ENCODE measurements at regions of chr6 and their contacts with region 1.

Region 1: GRCh38 chr6:16761471-16762267 is 409 bp upstream of the ATXN1 start:
- DNase-seq: peak; percentile 72
- ATAC-seq: peak; percentile 59
- H3K4me3 Mint-ChIP-seq: peak overlapping the region; percentile 95
- H3K27ac Mint-ChIP-seq: peak overlapping the region; percentile 92
- H3K4me1 Mint-ChIP-seq: peaks cover 38% of the 10 kb centered on the region
- H3K27me3 Mint-ChIP-seq: no peaks in the 10 kb centered on the region
- CTCF ChIP-seq: no peak

Region 2: DNA sequence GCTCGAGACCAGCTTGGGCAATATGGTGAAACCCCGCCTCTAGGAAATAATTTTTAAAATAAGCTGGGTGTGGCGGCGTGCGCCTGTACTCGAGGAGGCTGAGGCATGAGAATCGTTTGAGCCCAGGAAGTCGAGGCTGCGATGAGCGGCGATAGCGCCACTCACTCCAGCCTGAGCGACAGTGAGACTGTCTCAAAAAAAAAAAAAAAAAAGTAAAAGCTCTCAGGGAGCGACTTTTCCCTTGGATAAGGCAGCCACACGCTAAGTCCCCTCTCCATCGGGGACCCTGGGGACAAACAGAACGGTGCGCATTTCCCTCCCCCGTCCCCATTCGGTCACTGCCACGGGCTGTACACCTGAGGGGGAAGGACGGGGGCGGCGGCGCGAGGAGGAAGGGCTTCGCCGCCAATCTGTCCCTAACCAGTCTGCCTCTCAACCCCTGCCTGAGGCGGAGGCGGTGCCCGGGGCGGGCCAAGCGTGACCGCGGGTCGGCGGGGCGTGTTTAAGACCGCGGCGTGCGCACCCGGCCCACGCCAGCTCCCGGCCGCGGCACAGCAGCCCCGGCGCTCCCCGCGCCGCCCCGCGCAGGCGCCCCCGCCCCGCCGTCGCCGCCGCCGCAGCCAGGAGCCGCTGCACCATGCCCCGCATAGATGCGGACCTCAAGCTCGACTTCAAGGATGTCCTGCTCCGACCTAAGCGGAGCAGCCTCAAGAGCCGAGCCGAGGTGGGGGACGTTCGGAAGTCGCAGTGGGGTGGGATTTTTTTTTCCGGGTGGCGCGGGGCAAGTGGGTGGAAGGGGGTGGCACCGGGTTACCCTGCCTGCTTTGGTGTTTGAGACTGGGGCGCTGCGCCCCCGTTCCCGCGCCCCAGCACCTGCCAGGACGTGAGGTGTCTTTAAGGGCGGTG is 523.4 kb before region 1 on chr6 and contains the start of gene GMPR:
- CTCF ChIA-PET with region 1: no interaction called
- POLR2A ChIA-PET with region 1: no interaction called
- intact Hi-C with region 1: loop called (anchors 5 kb)
- DNase-seq: peak; percentile 57
- ATAC-seq: peak; percentile 87
- H3K4me3 Mint-ChIP-seq: peak within 1 kb of the TSS; percentile 91
- H3K27ac Mint-ChIP-seq: peak within 1 kb of the TSS; percentile 57
- H3K4me1 Mint-ChIP-seq: peaks cover 34% of the 10 kb centered on the region
- H3K27me3 Mint-ChIP-seq: peaks cover 24% of the 10 kb centered on the region
- CTCF ChIP-seq: no peak
- total RNA-seq, gene GMPR: 0.47 and 0.98 TPM in 2 replicates

Region 3: DNA sequence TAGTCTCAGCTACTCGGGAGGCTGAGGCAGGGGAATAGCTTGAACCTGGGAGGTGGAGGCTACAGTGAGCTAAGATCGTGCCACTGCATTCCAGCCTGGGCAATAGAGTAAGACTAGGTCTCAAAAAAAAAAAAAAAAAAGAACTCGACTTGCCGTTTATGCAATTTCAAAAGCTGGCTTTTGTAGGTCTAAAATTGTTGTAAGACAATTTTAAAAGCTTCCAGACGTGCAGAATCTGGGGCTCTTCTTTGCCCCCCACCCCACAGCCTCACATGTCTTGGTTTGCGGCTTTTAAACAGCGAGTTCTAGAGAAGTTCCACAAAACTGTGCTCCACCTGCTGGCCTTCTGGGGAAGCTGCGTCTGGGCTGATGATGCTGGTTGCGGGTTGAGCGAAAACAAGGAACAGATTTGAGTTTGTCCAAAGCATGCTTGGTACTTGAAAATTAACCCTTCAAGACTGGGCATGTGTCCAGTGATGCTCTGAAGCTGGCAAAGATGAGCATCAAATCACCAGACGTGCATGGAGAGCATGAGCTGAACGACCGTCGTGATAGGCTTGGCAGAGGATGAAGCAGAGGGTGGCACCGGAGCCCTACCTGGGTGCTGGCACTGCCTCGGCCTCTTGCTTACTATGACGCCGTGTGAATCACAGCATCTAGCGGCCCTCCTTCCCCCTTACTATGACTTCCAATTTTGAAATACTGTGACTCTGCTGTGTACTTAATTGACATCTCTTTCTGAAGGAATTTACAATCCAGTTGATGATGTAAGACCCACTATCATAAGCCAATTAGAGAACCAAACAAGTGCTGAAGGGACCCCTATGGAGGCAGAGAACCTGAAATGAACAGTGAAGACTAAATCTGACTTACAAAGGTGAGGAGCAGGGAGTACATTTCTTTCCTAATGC is 351.9 kb before region 1 on chr6:
- CTCF ChIA-PET with region 1: interaction called, 34 read pairs
- POLR2A ChIA-PET with region 1: interaction called, 20 read pairs
- intact Hi-C with region 1: loop called (anchors 1 kb)
- DNase-seq: peak; percentile 32
- ATAC-seq: peak; percentile 60
- H3K4me3 Mint-ChIP-seq: peak overlapping the region; percentile 63
- H3K27ac Mint-ChIP-seq: peak overlapping the region; percentile 37
- H3K4me1 Mint-ChIP-seq: peaks cover 66% of the 10 kb centered on the region
- H3K27me3 Mint-ChIP-seq: no peaks in the 10 kb centered on the region
- CTCF ChIP-seq: no peak

Region 4: DNA sequence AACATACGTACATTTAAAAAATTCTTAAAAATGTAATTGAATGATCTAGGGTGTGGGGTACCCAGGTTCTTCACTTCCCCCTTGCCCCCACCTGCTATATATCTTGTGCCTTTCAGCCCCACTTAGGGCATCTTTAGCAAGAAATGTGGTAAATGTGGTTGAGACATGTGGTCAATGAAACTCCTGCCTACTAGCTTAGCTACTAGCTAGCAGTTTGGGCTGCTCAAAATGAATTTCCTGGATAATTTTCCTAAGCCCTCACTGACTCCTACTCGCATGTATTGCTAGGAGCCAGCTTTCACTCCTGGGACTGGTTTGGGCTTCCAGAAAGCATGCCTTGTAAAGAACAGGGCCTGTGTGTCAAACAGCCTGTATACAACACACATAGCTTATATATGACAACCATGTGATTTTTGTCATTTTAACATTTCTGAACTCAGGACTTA is 257.7 kb before region 1 on chr6:
- CTCF ChIA-PET with region 1: interaction called, 174 read pairs
- POLR2A ChIA-PET with region 1: interaction called, 4 read pairs
- intact Hi-C with region 1: no loop called
- DNase-seq: no peak
- ATAC-seq: peak; percentile 75
- H3K4me3 Mint-ChIP-seq: peak overlapping the region; percentile 46
- H3K27ac Mint-ChIP-seq: peak overlapping the region; percentile 80
- H3K4me1 Mint-ChIP-seq: peaks cover 42% of the 10 kb centered on the region
- H3K27me3 Mint-ChIP-seq: no peaks in the 10 kb centered on the region
- CTCF ChIP-seq: no peak

Region 5: DNA sequence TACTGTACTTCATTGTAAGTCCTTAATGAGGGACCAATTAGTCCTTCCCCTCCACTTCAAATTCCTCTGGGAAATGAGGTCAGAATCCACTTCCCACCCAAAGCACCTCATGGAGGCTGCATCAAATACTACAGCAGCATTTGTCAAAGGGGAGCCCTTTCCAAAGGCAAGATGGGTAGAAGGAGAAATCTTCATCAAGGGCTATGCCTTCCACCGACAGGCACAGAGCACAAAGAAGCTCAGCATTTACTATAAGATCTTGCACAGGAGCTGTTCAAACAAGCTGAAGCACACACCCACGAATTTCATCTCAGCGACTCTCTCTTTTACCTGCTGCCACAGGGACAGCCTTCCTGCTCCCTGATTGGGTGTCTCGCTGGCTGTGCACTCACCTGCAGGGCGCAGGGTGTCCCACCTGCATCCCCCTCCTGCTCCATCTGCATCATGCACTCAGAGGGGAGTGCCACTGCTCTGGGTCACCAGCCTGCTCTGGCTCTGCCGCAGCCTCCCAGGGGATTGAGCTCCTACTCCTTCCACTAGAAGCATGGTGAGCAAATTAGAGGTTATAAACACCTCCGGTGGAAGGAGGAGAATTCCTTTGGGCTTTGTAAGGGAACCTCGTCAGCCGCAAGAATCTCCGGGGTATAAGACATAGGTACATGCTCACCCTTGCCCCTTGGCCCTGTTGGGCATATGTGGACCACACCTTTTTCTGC is 164.9 kb before region 1 on chr6:
- CTCF ChIA-PET with region 1: interaction called, 8 read pairs
- POLR2A ChIA-PET with region 1: interaction called, 18 read pairs
- intact Hi-C with region 1: loop called (anchors 1 kb)
- DNase-seq: no peak
- ATAC-seq: no peak
- H3K4me3 Mint-ChIP-seq: no peak overlapping the region
- H3K27ac Mint-ChIP-seq: no peak overlapping the region
- H3K4me1 Mint-ChIP-seq: peaks cover 49% of the 10 kb centered on the region
- H3K27me3 Mint-ChIP-seq: no peaks in the 10 kb centered on the region
- CTCF ChIP-seq: no peak

Region 6: DNA sequence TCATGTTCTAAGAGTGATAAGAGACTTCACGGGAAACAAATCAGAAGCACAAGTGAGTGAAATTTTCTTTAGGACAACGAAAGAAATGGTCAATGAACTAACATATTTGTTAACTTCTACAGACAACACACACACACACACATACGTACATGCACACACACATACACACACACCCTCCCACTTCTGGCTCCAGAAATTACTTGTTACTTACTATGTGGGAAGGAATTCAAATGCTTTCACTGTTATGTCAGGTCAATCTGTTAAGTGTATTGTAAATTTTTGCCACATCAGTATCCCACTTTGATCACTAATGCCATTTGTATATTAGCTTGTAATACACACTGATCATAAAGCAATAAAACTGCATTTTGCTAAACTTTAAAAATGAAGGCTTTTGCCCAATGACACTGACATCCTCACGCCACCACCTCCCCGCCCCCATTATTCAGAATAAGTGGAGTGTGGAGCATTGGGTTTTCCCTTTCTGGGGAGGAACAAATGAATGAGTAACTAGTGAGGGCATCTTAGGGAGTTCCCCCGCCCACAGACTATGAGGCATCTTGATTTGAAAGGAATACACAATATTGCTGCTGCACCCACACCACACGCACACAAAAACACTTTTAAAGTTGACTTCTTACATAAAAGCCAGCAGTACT is 76.6 kb before region 1 on chr6:
- CTCF ChIA-PET with region 1: interaction called, 12 read pairs
- POLR2A ChIA-PET with region 1: interaction called, 10 read pairs
- intact Hi-C with region 1: loop called (anchors 1 kb)
- DNase-seq: peak; percentile 45
- ATAC-seq: peak; percentile 71
- H3K4me3 Mint-ChIP-seq: peak overlapping the region; percentile 46
- H3K27ac Mint-ChIP-seq: peak overlapping the region; percentile 90
- H3K4me1 Mint-ChIP-seq: peaks cover 61% of the 10 kb centered on the region
- H3K27me3 Mint-ChIP-seq: no peaks in the 10 kb centered on the region
- CTCF ChIP-seq: no peak

Region 7: GRCh38 chr6:16964553-16965501 is 203.2 kb after region 1 on chr6:
- CTCF ChIA-PET with region 1: interaction called, 3 read pairs
- POLR2A ChIA-PET with region 1: no interaction called
- intact Hi-C with region 1: loop called (anchors 10 kb)
- DNase-seq: peak; percentile 15
- ATAC-seq: peak; percentile 54
- H3K4me3 Mint-ChIP-seq: no peak overlapping the region
- H3K27ac Mint-ChIP-seq: no peak overlapping the region
- H3K4me1 Mint-ChIP-seq: peaks cover 3% of the 10 kb centered on the region
- H3K27me3 Mint-ChIP-seq: peaks cover 12% of the 10 kb centered on the region
- CTCF ChIP-seq: no peak

Measured in activated B cell treated with CpG ODN at 0.5 μM for 24 hours (primary cell).